ENCODE measurements at regions of chr9 and their contacts with region 1.

Region 1: GRCh38 chr9:249025-249424 is 34.4 kb downstream of the DOCK8 start:
- DNase-seq: no peak
- ATAC-seq: no peak
- H3K4me3 Mint-ChIP-seq: no peak overlapping the region
- H3K27ac Mint-ChIP-seq: no peak overlapping the region
- H3K4me1 Mint-ChIP-seq: peaks cover 13% of the 10 kb centered on the region
- H3K27me3 Mint-ChIP-seq: no peaks in the 10 kb centered on the region
- CTCF ChIP-seq: no peak

Region 2: DNA sequence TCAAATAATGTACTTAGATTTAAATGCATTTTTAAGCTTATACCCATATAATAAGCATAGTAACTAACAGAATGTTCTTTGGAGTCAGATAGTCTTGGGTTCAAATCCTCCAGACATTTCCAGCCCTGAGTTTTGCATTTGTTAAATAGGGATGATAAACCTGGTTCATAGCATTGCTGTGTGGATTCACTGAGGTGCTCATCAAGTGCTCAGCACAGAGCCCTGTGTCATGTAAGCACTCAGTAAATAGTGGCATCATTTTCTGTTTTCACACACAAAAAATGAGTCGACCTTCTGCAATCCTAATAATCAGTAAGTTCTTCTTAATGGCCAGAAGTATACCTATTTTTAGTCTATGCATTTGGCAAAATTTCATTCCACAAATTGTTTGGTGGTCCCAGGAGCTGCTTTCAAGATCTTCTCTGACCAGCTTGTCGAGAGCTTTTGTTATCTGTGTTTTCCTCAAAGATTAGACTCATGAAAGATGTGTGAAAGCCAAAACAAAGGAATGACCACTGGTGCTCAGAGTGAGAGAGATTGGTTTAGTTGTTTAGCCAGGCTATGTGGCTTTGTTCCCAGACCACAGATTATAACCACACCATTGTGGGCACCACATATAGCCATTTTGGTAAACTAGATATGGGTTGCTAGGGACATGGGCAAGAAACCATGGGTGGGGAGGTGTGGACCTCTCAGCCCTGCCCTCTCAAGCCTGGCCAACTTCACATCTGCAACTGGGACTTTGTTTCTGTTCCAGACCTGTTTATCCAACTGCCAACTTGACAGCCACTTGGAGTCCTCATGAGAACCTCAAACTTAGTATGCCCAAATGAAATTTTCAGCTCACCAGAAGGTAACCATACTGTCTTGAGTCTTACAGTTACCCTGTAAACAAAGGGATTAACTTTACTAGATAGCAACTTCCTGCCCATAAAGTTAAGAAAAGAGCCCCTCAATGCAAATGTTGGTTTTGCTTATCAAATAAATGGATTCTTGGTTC is 10.7 kb after region 1 on chr9:
- CTCF ChIA-PET with region 1: no interaction called
- POLR2A ChIA-PET with region 1: interaction called, 4 read pairs
- intact Hi-C with region 1: loop called (anchors 2 kb)
- DNase-seq: no peak
- ATAC-seq: no peak
- H3K4me3 Mint-ChIP-seq: no peak overlapping the region
- H3K27ac Mint-ChIP-seq: no peak overlapping the region
- H3K4me1 Mint-ChIP-seq: peaks cover 19% of the 10 kb centered on the region
- H3K27me3 Mint-ChIP-seq: no peaks in the 10 kb centered on the region
- CTCF ChIP-seq: no peak

Region 3: GRCh38 chr9:266228-266627 is 17.2 kb after region 1 on chr9:
- CTCF ChIA-PET with region 1: no interaction called
- POLR2A ChIA-PET with region 1: interaction called, 4 read pairs
- intact Hi-C with region 1: loop called (anchors 2 kb)
- DNase-seq: no peak
- ATAC-seq: no peak
- H3K4me3 Mint-ChIP-seq: no peak overlapping the region
- H3K27ac Mint-ChIP-seq: no peak overlapping the region
- H3K4me1 Mint-ChIP-seq: peaks cover 11% of the 10 kb centered on the region
- H3K27me3 Mint-ChIP-seq: no peaks in the 10 kb centered on the region
- CTCF ChIP-seq: no peak

Region 4: GRCh38 chr9:278651-279050 is 29.6 kb after region 1 on chr9:
- CTCF ChIA-PET with region 1: no interaction called
- POLR2A ChIA-PET with region 1: no interaction called
- intact Hi-C with region 1: no loop called
- DNase-seq: no peak
- ATAC-seq: peak; percentile 51
- H3K4me3 Mint-ChIP-seq: no peak overlapping the region
- H3K27ac Mint-ChIP-seq: no peak overlapping the region
- H3K4me1 Mint-ChIP-seq: peaks cover 52% of the 10 kb centered on the region
- H3K27me3 Mint-ChIP-seq: no peaks in the 10 kb centered on the region
- CTCF ChIP-seq: no peak

Region 5: GRCh38 chr9:567128-567746 is 318.2 kb after region 1 on chr9:
- CTCF ChIA-PET with region 1: no interaction called
- POLR2A ChIA-PET with region 1: no interaction called
- intact Hi-C with region 1: no loop called
- DNase-seq: no peak
- ATAC-seq: peak; percentile 63
- H3K4me3 Mint-ChIP-seq: peak overlapping the region; percentile 20
- H3K27ac Mint-ChIP-seq: peak overlapping the region; percentile 41
- H3K4me1 Mint-ChIP-seq: peaks cover 42% of the 10 kb centered on the region
- H3K27me3 Mint-ChIP-seq: peaks cover 2% of the 10 kb centered on the region
- CTCF ChIP-seq: no peak

Measured in activated B cell treated with CpG ODN at 0.5 μM for 24 hours (primary cell).